Left cardiac atrium (tissue), 4 donors: ENCODE measurements at regions of chr18 and their contacts with region 1.

Region 1: DNA sequence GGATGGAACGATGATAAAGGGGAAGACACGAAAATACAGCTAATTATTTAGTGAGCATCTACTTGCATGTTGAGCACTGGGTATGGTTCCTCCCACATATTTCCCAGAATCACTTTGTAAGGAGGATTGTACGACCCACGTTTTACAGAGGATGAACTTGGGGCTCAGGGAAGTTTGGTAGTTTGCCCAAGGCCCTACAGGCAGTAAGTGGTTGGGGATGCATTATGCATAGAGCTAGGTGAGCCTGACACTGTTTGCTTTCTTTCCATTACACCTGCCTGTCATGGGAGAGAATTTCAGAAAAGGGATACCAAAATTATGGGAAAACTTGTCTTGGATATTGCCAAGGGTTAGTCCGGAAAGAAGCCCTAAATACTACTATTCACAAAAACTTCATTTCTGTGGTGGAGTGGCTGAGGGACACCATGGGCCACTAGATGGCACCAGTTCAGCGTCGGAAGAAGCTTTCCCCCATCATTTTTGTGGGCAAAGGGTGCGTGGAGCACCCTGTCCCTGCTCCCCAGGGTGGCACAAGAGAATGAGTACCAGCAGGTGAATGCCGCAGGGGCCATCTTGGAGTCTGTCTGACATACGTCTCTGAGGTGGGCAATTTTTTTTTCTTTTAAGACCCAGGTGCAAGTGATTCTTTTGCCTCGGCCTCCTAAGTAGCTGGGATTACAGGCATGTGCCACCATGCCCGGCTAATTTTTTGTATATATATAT is 23.5 kb upstream of the C18orf32 start:
- DNase-seq: peak; percentile 33
- ATAC-seq: peak; percentile 59 to 73

Region 2: GRCh38 chr18:49747876-49748275 is 237.3 kb after region 1 on chr18:
- intact Hi-C with region 1: no loop called
- DNase-seq: no peak
- ATAC-seq: no peak

Region 3: GRCh38 chr18:50356036-50356945 is 845.7 kb after region 1 on chr18:
- intact Hi-C with region 1: loop called in 1 of 2 experiments (anchors 10 kb)
- DNase-seq: no peak
- ATAC-seq: peak; percentile 27 to 63